ENCODE measurements at regions of chr10 and their contacts with region 1.

Region 1: DNA sequence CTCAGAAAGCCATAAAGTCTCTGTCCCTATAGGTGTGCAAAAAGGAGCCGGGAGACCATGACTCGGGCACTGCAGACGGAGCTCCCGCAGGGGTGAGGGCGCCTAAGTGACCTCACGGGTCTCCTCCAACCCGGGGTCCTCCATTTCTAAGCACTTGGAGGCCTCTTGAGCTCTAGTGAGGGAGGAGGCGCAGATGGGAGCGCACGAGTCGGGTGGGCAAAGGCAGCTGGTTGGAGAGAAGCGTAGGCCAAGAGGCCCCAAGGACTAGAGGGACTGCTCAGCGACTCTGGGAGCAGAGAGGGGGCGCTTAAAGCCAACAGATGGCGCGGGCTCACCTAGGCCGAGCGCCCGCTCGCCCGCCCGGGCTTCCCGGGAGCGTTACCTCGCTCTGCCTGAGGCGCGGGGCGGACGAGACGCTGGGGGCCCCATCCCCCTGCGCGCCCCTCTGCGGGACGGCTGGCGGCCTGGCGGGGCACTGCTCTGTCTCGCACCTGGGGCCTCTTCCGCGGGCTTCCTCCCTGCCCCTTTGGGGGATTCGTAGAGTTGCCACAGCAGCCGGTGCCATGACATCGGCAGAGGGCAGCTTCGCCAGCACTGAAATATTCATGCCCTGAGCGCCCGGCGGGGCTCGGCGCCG is 518 bp upstream of the CDH23 start:
- DNase-seq: peak; percentile 70
- ATAC-seq: peak; percentile 85 to 93

Region 2: DNA sequence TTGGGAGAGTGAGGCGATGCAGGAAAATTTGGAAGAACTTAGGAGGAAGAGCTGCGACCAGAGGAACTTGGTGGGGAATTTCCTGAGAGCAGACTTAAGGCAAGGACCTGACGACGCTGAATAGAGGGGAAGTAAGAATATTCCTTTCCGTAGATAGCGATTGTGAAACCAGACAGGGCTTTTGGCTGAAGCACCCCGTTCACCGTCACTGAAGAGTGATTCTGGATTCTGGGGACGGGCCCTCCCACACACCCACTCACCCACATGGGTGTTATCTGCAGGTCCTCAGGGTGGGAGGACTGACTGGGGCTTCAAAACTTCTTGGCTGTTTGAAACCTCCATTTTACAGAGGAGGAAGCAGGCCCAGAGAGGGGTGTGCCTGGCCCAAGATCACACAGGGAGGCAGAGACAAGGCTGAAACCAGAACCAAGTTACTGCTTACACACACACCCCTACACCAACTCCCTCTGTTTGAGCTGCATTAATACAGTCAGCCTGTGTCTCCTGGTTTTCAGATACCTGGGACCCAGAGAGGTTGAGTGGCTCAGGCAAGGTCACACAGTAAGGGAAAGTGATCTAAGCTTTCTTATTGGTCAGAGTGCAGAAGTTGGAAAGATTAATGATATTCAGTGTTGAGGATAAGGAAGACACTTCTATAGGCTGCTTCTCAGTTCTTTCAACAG is 36.7 kb before region 1 on chr10:
- intact Hi-C with region 1: no loop called
- DNase-seq: peak; percentile 64
- ATAC-seq: peak; percentile 75 to 80

Region 3: GRCh38 chr10:71454347-71454746 is 58.1 kb after region 1 on chr10:
- intact Hi-C with region 1: no loop called
- DNase-seq: no peak
- ATAC-seq: no peak

Region 4: GRCh38 chr10:71687077-71687476 is 290.9 kb after region 1 on chr10:
- intact Hi-C with region 1: no loop called
- DNase-seq: no peak
- ATAC-seq: peak in 1 of 2 donors; percentile 5

Region 5: DNA sequence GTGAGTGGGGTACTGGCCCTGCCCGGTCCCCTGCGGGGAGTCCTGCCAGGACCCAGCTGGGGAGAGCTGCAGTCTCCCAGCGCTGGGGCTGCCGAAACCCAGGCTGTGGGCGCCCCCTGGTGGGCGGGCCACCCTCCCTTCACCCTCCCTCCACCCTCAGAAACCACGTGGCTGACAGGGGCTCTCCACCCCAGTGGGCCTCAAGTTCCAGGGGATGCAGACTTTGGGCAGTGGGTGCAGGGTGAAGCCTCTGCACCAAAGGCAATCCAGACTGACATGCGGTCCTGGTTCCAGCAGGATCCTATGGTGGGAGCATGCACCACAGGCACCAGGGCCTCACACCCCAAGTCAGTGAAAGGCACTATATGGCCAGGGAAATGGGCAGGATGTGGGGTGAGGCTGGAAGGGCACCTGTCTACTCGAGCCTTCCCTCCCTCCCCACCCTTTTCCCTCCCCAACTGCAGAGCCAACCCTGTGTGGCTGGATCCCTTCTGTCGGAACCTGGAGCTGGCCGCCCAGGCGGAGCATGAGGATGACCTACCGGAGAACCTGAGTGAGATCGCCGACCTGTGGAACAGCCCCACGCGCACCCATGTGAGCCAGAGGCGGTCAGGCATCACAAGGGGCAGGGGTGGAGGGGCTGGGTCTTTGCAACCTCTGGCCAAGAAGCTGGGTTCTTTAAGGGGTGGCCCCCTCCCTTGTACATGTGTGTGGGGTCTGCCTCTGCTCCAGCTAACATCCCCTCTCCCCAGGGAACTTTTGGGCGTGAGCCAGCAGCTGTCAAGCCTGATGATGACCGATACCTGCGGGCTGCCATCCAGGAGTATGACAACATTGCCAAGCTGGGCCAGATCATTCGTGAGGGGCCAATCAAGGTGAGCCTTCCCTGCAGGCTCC is 416.1 kb after region 1 on chr10:
- intact Hi-C with region 1: loop called (anchors 10 kb)
- DNase-seq: peak; percentile 80
- ATAC-seq: peak; percentile 81

Measured in left cardiac atrium (tissue), 4 donors.